ENCODE measurements at regions of chr14 and their contacts with region 1.

Region 1: DNA sequence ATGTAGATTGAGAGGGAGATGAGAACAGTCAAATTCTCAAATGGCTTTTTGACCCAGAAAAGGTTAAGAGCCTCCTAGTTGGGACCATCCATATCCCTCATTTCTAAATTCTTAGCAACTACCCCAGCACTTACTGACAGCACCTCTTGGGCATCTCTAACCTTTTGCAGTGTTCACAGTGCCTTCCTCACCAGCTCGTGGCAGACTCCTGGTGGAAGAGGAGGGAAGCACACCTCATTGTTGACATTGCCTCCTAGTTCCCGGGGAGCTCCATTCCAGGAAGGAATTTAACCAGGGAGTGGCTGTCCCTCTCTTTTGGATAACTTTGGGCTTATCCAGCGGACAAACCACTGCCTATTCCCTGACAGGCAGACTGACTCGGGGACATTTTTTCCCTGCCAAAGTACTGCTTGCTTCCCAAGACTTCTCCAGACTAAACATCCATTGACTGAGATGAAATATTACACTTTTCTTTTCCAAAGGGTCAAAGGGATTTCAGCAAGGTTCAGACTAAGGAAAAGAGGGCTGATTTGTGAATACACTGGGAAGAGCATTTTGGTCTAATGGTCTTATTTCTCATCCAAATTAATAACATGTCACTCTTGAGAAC is 9.0 kb upstream of the OR6J1 start:
- DNase-seq: peak; percentile 75
- H3K4me3 ChIP-seq: no peak overlapping the region
- H3K27ac ChIP-seq: peak overlapping the region; percentile 29
- H3K4me1 ChIP-seq: peaks cover 19% of the 10 kb centered on the region
- H3K27me3 ChIP-seq: no peaks in the 10 kb centered on the region
- CTCF ChIP-seq: peak; percentile 89 to 95
- POLR2A ChIP-seq: no peak

Region 2: DNA sequence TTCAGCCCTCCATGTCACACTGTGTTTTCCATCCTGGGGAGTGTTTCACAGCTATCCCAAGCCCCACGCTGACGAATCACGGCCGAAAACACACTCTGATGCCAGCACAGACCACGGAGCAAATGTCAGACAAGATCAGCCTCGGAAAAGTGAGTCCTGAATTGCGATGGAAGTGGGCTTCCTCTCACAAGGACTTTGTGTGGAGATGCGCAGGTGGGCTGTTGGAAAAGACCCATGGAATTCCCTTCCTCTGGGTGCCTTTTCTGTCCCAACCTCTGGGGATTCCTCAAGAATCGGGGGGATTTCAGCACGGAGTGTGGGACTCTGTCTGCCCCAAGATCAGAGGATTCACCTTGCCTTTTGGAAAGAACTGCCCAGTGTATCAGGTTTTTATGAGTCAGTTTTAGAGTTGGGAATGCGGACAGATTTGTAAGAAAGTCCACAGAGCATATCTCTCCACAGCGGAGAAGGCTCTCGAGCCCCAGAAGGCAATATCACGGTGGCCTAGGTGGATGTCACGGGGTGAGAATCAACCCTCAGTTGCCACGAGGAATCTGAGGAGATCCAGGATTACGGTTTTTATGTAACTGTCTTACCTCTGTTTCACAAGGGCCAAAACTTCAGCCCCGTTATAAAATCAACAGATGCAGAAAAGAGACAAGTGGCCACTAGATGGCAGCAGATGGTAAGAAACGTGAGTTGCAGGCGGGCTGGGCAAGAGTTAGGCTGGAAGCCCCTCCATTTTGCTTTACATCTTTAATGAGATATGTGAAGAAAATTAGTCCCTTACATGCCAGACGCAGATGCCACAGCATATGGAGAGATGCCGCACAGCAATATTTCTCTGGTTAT is 266.0 kb before region 1 on chr14:
- CTCF ChIA-PET with region 1: interaction called, 24 read pairs
- POLR2A ChIA-PET with region 1: no interaction called
- dilution Hi-C with region 1: no loop called
- intact Hi-C with region 1: loop called (anchors 1 kb)
- DNase-seq: peak; percentile 77
- H3K4me3 ChIP-seq: no peak overlapping the region
- H3K27ac ChIP-seq: no peak overlapping the region
- H3K4me1 ChIP-seq: peaks cover 6% of the 10 kb centered on the region
- H3K27me3 ChIP-seq: peaks cover 6 to 15% of the 10 kb centered on the region in 2 experiments
- CTCF ChIP-seq: peak; percentile 68 to 70
- POLR2A ChIP-seq: no peak

Region 3: GRCh38 chr14:22589096-22589839 is 63.8 kb before region 1 on chr14 and contains the start of gene DAD1:
- CTCF ChIA-PET with region 1: interaction called, 34 read pairs
- POLR2A ChIA-PET with region 1: no interaction called
- dilution Hi-C with region 1: no loop called
- intact Hi-C with region 1: no loop called
- DNase-seq: peak; percentile 100
- H3K4me3 ChIP-seq: peak within 1 kb of the TSS; percentile 70 to 99 (median 92)
- H3K27ac ChIP-seq: peak within 1 kb of the TSS; percentile 84
- H3K4me1 ChIP-seq: peaks cover 23% of the 10 kb centered on the region
- H3K27me3 ChIP-seq: peaks cover 3 to 4% of the 10 kb centered on the region in 2 experiments
- CTCF ChIP-seq: no peak
- POLR2A ChIP-seq: peak; percentile 98
- total RNA-seq, gene DAD1: 299 and 304 TPM in 2 replicates

Region 4: DNA sequence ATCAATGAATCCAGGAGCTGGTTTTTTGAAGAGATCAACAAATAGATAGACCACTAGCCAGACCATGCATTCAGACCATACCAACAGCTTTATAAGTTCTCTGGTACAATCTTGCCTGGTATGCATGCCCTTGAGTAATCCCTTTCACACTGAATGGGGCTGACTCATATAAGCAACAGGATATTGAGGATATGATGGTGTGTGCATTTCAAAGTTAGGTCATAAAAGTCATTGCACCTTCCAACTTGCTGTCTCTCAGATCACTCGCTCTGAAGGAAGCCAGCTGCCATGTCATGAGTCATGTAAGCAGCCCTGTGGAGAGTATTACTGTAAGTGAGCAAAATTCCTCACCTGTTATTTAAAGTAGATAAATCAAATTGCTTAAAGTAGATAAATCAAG is 36.1 kb after region 1 on chr14:
- CTCF ChIA-PET with region 1: interaction called, 39 read pairs
- POLR2A ChIA-PET with region 1: no interaction called
- dilution Hi-C with region 1: no loop called
- intact Hi-C with region 1: loop called (anchors 1 kb)
- DNase-seq: peak; percentile 96
- H3K4me3 ChIP-seq: no peak overlapping the region
- H3K27ac ChIP-seq: peak overlapping the region; percentile 91
- H3K4me1 ChIP-seq: peaks cover 32% of the 10 kb centered on the region
- H3K27me3 ChIP-seq: no peaks in the 10 kb centered on the region
- CTCF ChIP-seq: no peak
- POLR2A ChIP-seq: peak; percentile 40

Region 5: GRCh38 chr14:22766456-22767322 is 113.6 kb after region 1 on chr14 and contains the start of gene OXA1L:
- CTCF ChIA-PET with region 1: interaction called, 49 read pairs
- POLR2A ChIA-PET with region 1: no interaction called
- dilution Hi-C with region 1: no loop called
- intact Hi-C with region 1: loop called (anchors 1 kb)
- DNase-seq: peak; percentile 98
- H3K4me3 ChIP-seq: peak within 1 kb of the TSS; percentile 77 to 99 (median 92)
- H3K27ac ChIP-seq: peak within 1 kb of the TSS; percentile 84
- H3K4me1 ChIP-seq: peaks cover 24% of the 10 kb centered on the region
- H3K27me3 ChIP-seq: no peaks in the 10 kb centered on the region
- CTCF ChIP-seq: no peak
- POLR2A ChIP-seq: peak; percentile 81
- total RNA-seq, gene OXA1L: 200 and 212 TPM in 2 replicates

Region 6: DNA sequence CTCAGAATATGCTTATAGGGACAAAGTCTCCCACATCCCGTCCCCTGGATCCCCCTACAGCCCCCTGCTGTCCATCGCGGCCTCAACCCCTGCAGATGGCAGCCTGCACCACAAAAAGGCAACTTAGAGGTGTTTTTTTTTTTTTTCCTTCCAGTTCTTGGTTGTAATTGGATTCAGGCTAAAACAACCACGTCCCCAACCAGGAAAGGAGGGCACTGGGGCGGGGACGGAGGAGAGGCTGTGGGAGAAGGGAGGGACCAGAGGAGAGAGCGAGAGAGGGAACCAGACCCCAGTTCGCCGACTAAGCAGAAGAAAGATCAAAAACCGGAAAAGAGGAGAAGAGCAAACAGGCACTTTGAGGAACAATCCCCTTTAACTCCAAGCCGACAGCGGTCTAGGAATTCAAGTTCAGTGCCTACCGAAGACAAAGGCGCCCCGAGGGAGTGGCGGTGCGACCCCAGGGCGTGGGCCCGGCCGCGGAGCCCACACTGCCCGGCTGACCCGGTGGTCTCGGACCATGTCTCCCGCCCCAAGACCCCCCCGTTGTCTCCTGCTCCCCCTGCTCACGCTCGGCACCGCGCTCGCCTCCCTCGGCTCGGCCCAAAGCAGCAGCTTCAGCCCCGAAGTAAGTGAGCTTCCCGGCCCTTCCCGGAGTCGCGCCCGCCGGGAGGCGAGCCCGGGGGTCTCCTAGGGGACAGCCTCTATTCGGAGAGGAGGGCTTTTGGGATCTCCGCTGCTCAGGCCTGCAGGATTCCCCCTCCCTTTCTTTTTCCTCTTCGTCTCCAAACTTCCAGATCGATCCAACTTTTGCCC is 183.4 kb after region 1 on chr14 and contains the start of gene MMP14:
- CTCF ChIA-PET with region 1: interaction called, 13 read pairs
- POLR2A ChIA-PET with region 1: no interaction called
- dilution Hi-C with region 1: no loop called
- intact Hi-C with region 1: loop called (anchors 1 kb)
- DNase-seq: peak; percentile 92
- H3K4me3 ChIP-seq: peak within 1 kb of the TSS; percentile 75 to 94 (median 86)
- H3K27ac ChIP-seq: peak within 1 kb of the TSS; percentile 84
- H3K4me1 ChIP-seq: peaks cover 32% of the 10 kb centered on the region
- H3K27me3 ChIP-seq: no peaks in the 10 kb centered on the region
- CTCF ChIP-seq: peak; percentile 26 to 54
- POLR2A ChIP-seq: peak; percentile 95
- total RNA-seq, gene MMP14: 603 and 615 TPM in 2 replicates

Measured in endothelial cell of umbilical vein (primary cell).